ENCODE measurements at regions of chr6 and their contacts with region 1.

Region 1: GRCh38 chr6:43181942-43182860 is at the start of gene CUL9:
- DNase-seq: peak; percentile 74 to 95 (median 86)
- H3K4me3 ChIP-seq: peak within 1 kb of the TSS; percentile 57 to 93 (median 83)
- H3K27ac ChIP-seq: peak within 1 kb of the TSS in 57 of 59 donors; percentile 24 to 91 (median 82)
- H3K27me3 ChIP-seq: no peaks in the 10 kb centered on the region
- CTCF ChIP-seq: peak in 43 of 56 donors; percentile 6 to 58 (median 34)
- total RNA-seq, gene CUL9: 57.4 to 123 (median 84.1) TPM

Region 2: GRCh38 chr6:43113431-43114260 is 68.6 kb before region 1 on chr6:
- intact Hi-C with region 1: no loop called
- DNase-seq: no peak
- H3K4me3 ChIP-seq: no peak overlapping the region
- H3K27ac ChIP-seq: no peak overlapping the region
- H3K27me3 ChIP-seq: no peaks in the 10 kb centered on the region
- CTCF ChIP-seq: no peak

Region 3: GRCh38 chr6:43228951-43229802 is 47.0 kb after region 1 on chr6 and contains the start of gene DNPH1:
- intact Hi-C with region 1: loop called in 1 of 2 experiments (anchors 5 kb)
- DNase-seq: peak; percentile 62 to 93 (median 73)
- H3K4me3 ChIP-seq: peak within 1 kb of the TSS; percentile 43 to 84 (median 72)
- H3K27ac ChIP-seq: peak within 1 kb of the TSS in 48 of 59 donors; percentile 0 to 83 (median 60)
- H3K27me3 ChIP-seq: no peaks in the 10 kb centered on the region
- CTCF ChIP-seq: peak; percentile 72 to 98 (median 94)
- total RNA-seq, gene DNPH1: 18.4 to 54.6 (median 31.2) TPM

Region 4: GRCh38 chr6:43427406-43428111 is 245.4 kb after region 1 on chr6 and contains the start of gene ABCC10:
- intact Hi-C with region 1: no loop called
- DNase-seq: peak; percentile 85 to 95 (median 94)
- H3K4me3 ChIP-seq: peak within 1 kb of the TSS; percentile 52 to 99 (median 85)
- H3K27ac ChIP-seq: peak within 1 kb of the TSS; percentile 1 to 93 (median 85)
- H3K27me3 ChIP-seq: no peaks in the 10 kb centered on the region
- CTCF ChIP-seq: peak in 54 of 56 donors; percentile 5 to 72 (median 52)
- total RNA-seq, gene ABCC10: 16.3 to 62.8 (median 35.7) TPM

Measured in dorsolateral prefrontal cortex (tissue), 120 donors.